ENCODE measurements at regions of chr1 and their contacts with region 1.

Region 1: DNA sequence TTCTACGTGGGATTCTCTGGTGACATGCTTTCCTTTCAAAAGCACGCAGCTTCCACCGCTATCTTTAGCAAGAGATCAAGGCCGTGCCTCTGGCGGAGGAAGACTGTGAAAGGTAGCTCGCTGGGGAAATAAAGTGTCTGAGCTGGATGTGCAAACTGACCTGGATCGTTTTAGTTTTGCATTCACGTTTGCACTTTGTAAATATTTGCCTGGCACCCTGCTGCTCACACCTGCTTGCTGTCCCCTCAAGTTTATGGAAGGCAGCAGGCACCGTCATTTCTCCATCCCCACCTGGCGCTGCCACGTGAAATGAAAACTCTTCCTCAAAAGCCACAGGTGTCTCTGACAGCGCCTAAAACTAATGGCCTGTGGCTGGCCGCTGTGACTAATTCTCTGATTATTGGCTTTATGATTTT is 44.0 kb upstream of the TARDBP start:
- DNase-seq: no peak
- ATAC-seq: peak; percentile 49; the same call in 1 of the 2 replicates
- H3K4me3 ChIP-seq: peak overlapping the region; percentile 53
- H3K27ac ChIP-seq: no peak overlapping the region
- H3K4me1 ChIP-seq: 0 out of 2 replicates have a peak, but pooled peaks cover 1% of the 10 kb centered on the region
- H3K27me3 ChIP-seq: peaks cover 31% of the 10 kb centered on the region
- CTCF ChIP-seq: no peak
- POLR2A ChIP-seq: no peak
- RAD21 ChIP-seq: no peak

Region 2: DNA sequence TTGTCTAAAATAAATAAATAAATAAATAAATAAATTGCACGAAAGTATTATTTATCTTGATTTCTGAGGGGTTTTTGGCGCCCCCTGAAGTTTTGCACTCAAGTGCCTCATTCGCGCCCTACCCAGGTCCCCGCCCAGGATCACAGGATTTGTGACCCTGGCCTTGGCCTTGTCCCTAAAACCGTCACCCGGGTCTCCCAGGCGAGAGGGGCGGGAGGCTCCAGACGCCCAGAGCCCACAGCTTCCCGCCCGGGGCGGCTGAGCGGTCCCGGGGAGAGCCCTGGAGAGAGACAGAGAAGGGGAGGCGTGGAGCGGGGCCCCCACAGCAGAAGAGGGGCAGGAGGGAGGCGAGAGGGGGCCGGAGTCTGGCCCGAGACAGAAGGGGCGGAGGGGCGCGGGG is 80.1 kb before region 1 on chr1:
- CTCF ChIA-PET with region 1: no interaction called
- POLR2A ChIA-PET with region 1: interaction called, 12 read pairs
- dilution Hi-C with region 1: no loop called
- in situ Hi-C with region 1: no loop called
- intact Hi-C with region 1: no loop called
- DNase-seq: no peak
- ATAC-seq: no peak
- H3K4me3 ChIP-seq: no peak overlapping the region
- H3K27ac ChIP-seq: no peak overlapping the region
- H3K4me1 ChIP-seq: no peaks in the 10 kb centered on the region
- H3K27me3 ChIP-seq: peaks cover 49% of the 10 kb centered on the region
- CTCF ChIP-seq: no peak
- POLR2A ChIP-seq: no peak
- RAD21 ChIP-seq: no peak

Region 3: DNA sequence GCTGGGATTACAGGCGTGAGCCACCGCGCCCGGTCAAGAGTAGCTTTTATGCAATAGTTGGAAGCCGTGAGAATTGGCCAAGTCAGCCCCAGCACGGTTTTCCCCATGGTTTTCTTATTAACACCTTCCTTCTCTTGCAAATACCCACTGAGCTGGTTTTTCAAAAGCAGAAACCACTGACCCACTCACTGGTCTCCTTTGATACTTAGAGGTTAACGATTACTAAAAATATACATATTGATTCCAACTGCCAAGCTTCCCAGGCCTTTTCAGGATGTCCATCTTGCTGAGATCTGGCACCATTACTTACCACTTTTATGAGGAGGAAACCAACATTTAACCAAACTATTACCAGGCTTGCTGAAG is 18.1 kb after region 1 on chr1:
- CTCF ChIA-PET with region 1: no interaction called
- POLR2A ChIA-PET with region 1: no interaction called
- dilution Hi-C with region 1: no loop called
- in situ Hi-C with region 1: no loop called
- intact Hi-C with region 1: no loop called
- DNase-seq: no peak
- ATAC-seq: no peak
- H3K4me3 ChIP-seq: no peak overlapping the region
- H3K27ac ChIP-seq: no peak overlapping the region
- H3K4me1 ChIP-seq: no peaks in the 10 kb centered on the region
- H3K27me3 ChIP-seq: peaks cover 21% of the 10 kb centered on the region
- CTCF ChIP-seq: no peak
- POLR2A ChIP-seq: no peak
- RAD21 ChIP-seq: no peak